ENCODE measurements at regions of chr13 and their contacts with region 1.

Region 1: DNA sequence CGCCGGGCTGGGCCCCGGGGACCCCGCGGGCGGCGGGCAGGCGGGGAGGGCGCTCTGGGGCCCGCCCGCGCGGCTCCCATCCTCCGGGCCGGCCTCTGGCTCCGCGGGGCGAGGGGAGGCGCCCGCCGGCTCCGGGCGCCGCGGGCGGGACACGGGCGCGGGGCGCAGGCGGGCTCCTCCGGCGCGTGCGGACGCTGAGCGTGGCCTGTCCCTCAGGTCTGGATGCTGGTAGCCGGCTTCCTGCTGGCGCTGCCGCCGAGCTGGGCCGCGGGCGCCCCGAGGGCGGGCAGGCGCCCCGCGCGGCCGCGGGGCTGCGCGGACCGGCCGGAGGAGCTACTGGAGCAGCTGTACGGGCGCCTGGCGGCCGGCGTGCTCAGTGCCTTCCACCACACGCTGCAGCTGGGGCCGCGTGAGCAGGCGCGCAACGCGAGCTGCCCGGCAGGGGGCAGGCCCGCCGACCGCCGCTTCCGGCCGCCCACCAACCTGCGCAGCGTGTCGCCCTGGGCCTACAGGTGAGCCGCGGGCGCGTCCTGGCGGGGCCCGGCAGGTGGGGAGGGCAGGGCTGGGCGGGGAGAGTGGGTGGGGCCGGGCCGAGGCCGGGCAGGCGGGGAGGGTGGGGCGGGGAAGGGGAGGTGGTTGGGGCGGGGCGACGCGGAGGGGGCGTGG is 414 bp downstream of the IL17D start:
- DNase-seq: no peak
- H3K4me3 ChIP-seq: peak overlapping the region; percentile 68 to 77
- H3K27ac ChIP-seq: peak overlapping the region; percentile 77
- H3K4me1 ChIP-seq: peaks cover 29% of the 10 kb centered on the region
- H3K27me3 ChIP-seq: no peaks in the 10 kb centered on the region
- CTCF ChIP-seq: no peak
- POLR2A ChIP-seq: peak in 1 of 2 donors; percentile 45

Region 2: GRCh38 chr13:19984430-19985218 is 719.3 kb before region 1 on chr13:
- intact Hi-C with region 1: no loop called
- DNase-seq: no peak
- H3K4me3 ChIP-seq: no peak overlapping the region
- H3K27ac ChIP-seq: no peak overlapping the region
- H3K4me1 ChIP-seq: peaks cover 11% of the 10 kb centered on the region
- H3K27me3 ChIP-seq: no peaks in the 10 kb centered on the region
- CTCF ChIP-seq: peak in 1 of 3 experiments; percentile 20
- POLR2A ChIP-seq: no peak

Region 3: DNA sequence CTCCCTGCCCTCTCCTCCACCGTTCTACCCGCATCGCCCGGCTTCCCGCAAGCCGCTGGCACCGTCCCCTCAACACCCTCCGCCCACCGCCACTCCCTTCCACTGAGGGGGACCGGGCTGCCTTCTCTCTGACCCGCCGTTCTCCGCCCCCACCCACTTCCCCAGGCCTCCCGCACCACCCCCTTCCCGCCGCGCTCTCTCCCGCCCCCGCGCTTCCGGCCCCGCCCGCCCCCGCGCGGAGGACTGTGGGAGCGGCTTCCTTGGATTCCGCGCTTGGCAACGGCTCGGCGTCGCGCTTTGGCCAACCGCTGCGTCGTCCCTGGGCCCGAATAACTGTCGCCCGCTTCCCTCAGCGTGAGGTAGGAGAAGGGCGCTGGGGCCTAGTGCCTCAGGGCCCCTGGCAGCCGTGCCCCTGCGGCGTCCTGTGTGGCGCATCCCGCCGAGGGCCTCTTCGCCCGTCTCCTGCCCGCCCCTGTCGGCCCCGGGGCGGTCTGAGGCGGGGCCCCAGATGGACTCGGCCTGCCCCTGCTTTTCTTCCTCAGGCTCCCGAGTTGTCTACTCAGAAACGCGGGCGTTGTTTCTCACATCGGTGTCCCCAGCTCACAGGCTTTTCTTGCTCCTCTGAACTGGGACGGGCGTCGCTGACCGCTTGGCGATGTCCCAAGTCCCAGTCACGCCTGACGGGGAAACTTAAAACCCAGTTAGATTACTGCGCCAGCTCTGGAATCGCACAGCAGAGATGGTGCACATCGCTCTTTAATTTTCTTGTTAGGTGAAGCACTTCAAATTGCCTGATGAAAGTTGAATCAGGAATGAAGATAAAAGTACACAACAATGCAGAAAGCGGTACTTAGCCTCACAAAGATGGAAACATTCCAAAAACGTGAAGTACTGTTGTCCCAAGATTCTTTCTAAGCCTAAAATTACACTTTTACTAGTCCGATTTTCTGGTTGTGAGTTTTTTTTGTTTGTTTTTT is 136.7 kb before region 1 on chr13 and contains the start of gene IFT88:
- intact Hi-C with region 1: loop called (anchors 2 kb)
- DNase-seq: peak in 1 of 2 donors; percentile 92
- H3K4me3 ChIP-seq: peak within 1 kb of the TSS; percentile 59 to 74
- H3K27ac ChIP-seq: peak within 1 kb of the TSS; percentile 91
- H3K4me1 ChIP-seq: peaks cover 10% of the 10 kb centered on the region
- H3K27me3 ChIP-seq: no peaks in the 10 kb centered on the region
- CTCF ChIP-seq: no peak
- POLR2A ChIP-seq: peak in 1 of 2 donors; percentile 12
- total RNA-seq, gene IFT88: 6.9 TPM

Region 4: GRCh38 chr13:20773194-20774080 is 69.5 kb after region 1 on chr13 and contains the start of gene EEF1AKMT1:
- intact Hi-C with region 1: loop called (anchors 10 kb)
- DNase-seq: peak in 1 of 2 donors; percentile 93
- H3K4me3 ChIP-seq: peak within 1 kb of the TSS; percentile 64 to 68
- H3K27ac ChIP-seq: peak within 1 kb of the TSS; percentile 84
- H3K4me1 ChIP-seq: peaks cover 7% of the 10 kb centered on the region
- H3K27me3 ChIP-seq: no peaks in the 10 kb centered on the region
- CTCF ChIP-seq: peak in 1 of 3 experiments; percentile 8
- POLR2A ChIP-seq: peak in 1 of 2 donors; percentile 92
- total RNA-seq, gene EEF1AKMT1: 6.9 TPM

Region 5: DNA sequence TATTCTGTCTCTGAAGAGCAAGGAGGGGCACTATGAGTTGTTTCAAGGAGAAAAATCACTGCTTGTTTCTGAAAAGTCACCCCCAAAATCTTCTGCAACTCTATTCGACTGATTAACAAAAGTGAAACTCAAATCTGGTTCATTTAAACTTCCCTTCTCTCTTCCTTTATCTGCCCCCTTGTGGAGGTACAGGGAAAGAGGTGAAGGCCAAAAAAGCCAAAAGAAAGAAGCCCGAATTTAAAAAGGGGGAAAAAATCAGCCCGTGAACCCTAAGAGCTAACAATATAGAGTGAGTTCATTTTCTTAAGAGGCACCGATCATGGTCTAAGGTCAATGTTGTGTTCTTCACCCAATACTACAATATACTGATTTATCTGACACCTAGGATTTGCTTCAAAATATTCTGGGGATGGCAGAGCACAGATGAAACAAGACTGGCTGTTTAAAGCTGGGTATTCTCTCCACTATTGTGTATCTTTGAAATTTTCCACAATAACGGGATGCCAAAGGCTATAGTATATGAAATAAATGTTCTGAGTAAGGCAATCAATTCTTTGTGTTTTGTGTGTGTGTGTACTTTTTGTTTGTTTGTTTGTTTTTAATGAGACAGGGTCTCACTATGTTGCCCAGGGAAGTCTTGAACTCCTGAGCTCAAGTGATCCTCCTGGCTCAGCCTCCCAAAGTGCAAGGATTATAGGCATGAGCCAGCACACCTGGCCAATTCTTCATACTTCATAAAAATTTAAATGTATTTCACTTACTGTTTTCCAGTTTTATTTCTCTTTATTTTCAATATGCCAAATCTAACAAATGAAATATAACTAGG is 124.8 kb after region 1 on chr13:
- intact Hi-C with region 1: loop called (anchors 5 kb)
- DNase-seq: no peak
- H3K4me3 ChIP-seq: peak overlapping the region in 1 of 2 donors; percentile 28
- H3K27ac ChIP-seq: peak overlapping the region; percentile 25
- H3K4me1 ChIP-seq: peaks cover 9% of the 10 kb centered on the region
- H3K27me3 ChIP-seq: no peaks in the 10 kb centered on the region
- CTCF ChIP-seq: peak; percentile 48 to 83 (median 79)
- POLR2A ChIP-seq: no peak

Region 6: DNA sequence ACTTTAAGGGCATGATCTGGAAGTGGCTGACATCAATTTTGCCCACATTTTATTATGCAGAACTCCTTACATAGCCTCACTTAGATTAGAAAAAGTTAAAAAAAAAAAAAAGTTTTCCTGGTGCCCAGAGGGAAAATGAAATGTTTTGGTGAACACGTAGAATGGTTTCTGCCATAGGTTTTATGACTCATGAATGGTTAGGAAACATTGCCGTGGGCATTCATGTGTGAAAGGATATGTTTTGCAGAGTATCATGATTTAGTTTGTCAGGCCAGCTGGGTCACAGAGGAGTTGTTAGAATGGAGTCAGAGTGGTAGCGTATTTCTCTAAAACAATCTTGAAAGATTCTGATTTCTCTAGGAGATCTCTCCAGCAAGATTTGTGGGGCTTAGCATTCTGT is 606.3 kb after region 1 on chr13:
- intact Hi-C with region 1: no loop called
- DNase-seq: no peak
- H3K4me3 ChIP-seq: no peak overlapping the region
- H3K27ac ChIP-seq: no peak overlapping the region
- H3K4me1 ChIP-seq: no peaks in the 10 kb centered on the region
- H3K27me3 ChIP-seq: no peaks in the 10 kb centered on the region
- CTCF ChIP-seq: no peak
- POLR2A ChIP-seq: no peak

Measured in vagina (tissue), 2 donors.